ENCODE measurements at regions of chr11 and their contacts with region 1.

Region 1: GRCh38 chr11:20337526-20338154 is 25.9 kb upstream of the HTATIP2 start:
- H3K4me3 ChIP-seq: no peak overlapping the region
- H3K27ac ChIP-seq: no peak overlapping the region
- H3K4me1 ChIP-seq: no peaks in the 10 kb centered on the region
- CTCF ChIP-seq: peak; percentile 44; the same call in 1 of the 2 replicates

Region 2: GRCh38 chr11:20355221-20356219 is 17.9 kb after region 1 on chr11:
- CTCF ChIA-PET with region 1: interaction called, 26 read pairs
- POLR2A ChIA-PET with region 1: no interaction called
- H3K4me3 ChIP-seq: no peak overlapping the region
- H3K27ac ChIP-seq: no peak overlapping the region
- H3K4me1 ChIP-seq: no peaks in the 10 kb centered on the region
- CTCF ChIP-seq: no peak